PC-9 (cell line): ENCODE measurements at regions of chr3 and their contacts with region 1.

Region 1: GRCh38 chr3:132343018-132343612 is 25.9 kb downstream of the ACP3 start:
- DNase-seq: peak; percentile 25 to 51
- H3K4me3 ChIP-seq: no peak overlapping the region
- H3K27ac ChIP-seq: no peak overlapping the region
- H3K4me1 ChIP-seq: peaks cover 44% of the 10 kb centered on the region
- H3K27me3 ChIP-seq: no peaks in the 10 kb centered on the region
- CTCF ChIP-seq: peak; percentile 86

Region 2: DNA sequence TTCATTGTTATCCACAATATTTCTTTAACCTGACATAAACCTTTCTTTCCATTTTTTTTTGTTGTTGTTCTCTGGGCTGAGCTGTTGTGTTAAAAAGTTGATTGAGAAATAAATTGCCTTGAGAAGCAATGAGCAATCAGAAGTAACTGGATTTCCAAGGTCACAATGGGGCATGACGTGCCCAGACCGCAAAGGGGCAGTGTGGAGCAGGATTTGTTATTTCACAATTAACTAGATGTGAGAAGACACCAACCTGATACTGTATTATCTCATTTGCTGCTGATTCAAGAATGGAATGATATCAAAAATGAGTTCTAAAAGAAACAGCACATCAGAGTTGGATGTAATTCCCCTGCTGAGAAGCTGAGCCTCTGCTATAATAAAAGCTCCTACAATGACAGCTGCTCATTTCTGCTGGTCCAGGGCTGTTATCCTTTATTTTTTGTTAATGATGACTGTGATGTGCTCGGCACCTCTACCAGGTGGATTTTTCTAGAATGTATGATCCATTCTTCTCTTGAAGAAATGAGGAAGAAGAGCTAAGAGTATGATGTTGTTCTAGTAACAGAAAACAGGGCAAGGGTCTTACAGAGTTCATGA is 336.4 kb before region 1 on chr3:
- CTCF ChIA-PET with region 1: no interaction called
- POLR2A ChIA-PET with region 1: no interaction called
- intact Hi-C with region 1: loop called (anchors 10 kb)
- DNase-seq: peak in 1 of 2 experiments; percentile 33
- H3K4me3 ChIP-seq: no peak overlapping the region
- H3K27ac ChIP-seq: no peak overlapping the region
- H3K4me1 ChIP-seq: peaks cover 40% of the 10 kb centered on the region
- H3K27me3 ChIP-seq: no peaks in the 10 kb centered on the region
- CTCF ChIP-seq: peak; percentile 70

Region 3: DNA sequence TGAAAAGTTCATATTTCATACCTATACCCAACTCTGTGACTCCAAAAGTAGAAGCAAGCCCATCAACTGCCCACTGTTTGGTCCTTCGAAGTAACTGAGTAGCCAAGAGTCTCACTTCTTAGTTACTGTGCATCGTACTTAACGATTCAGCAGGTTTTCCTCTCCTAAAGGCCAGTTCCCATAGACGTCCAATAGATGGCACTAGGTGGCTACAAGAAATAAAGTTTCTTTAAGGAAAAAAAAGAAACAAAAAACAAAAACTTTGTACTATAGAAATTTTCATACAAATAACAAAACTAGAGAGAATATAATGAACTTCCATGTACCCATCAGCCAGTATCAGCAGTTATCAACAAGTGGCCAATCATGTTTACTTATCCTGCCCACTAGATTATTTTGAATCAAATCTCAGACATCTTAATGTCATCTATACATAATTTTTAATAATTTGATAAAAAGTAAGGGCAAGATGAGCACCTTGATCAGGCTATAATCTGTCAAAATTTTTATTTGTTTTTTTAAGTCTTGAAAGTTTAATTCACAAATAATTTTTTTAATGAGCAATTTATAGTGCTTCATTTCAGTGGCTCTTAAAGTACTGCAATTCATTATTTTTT is 89.7 kb before region 1 on chr3:
- CTCF ChIA-PET with region 1: interaction called, 36 read pairs
- POLR2A ChIA-PET with region 1: interaction called, 4 read pairs
- intact Hi-C with region 1: loop called (anchors 1 kb)
- DNase-seq: peak; percentile 16 to 56
- H3K4me3 ChIP-seq: no peak overlapping the region
- H3K27ac ChIP-seq: no peak overlapping the region
- H3K4me1 ChIP-seq: peaks cover 34% of the 10 kb centered on the region
- H3K27me3 ChIP-seq: no peaks in the 10 kb centered on the region
- CTCF ChIP-seq: peak; percentile 83

Region 4: DNA sequence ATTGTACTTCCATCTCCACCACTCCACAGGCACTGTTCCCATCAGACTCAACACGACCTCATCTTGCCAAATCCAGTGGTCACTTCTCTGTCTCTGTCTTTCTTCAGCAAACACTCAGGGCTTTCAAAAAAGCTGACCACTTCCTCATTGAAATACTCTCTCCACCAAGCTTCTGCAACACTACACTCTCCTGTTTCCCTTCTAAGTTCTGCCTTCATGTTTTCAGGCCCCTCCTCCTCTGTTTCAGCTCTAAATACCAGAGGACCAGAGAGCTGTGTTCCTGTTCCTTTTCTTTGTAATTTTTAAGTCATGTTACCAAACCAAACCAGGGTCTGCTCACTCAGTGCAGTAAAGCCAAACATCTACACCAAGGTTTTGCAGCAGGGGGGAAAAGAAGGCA is 59.7 kb before region 1 on chr3:
- CTCF ChIA-PET with region 1: interaction called, 5 read pairs
- POLR2A ChIA-PET with region 1: interaction called, 4 read pairs
- intact Hi-C with region 1: loop called (anchors 1 kb)
- DNase-seq: peak; percentile 14 to 59
- H3K4me3 ChIP-seq: no peak overlapping the region
- H3K27ac ChIP-seq: no peak overlapping the region
- H3K4me1 ChIP-seq: peaks cover 12% of the 10 kb centered on the region; the same call in 1 of the 2 replicates
- H3K27me3 ChIP-seq: no peaks in the 10 kb centered on the region
- CTCF ChIP-seq: no peak

Region 5: DNA sequence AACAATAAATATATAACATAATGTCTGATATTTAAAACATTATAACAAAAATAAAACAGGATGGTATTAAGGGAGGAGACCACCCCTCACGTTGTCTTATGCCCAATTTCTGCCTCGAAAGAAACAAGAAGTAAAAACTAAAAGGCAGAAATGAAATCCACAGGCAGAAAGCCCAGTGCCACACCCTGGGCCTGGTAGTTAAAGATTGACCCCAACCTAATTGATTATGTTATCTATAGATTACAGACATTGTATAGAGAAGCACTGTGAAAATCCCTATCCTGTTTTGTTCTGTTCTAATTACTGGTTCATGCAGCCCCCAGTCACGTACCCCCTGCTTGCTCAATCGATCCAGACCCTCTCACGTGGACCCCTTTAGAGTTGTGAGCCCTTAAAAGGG is 48.2 kb before region 1 on chr3:
- CTCF ChIA-PET with region 1: no interaction called
- POLR2A ChIA-PET with region 1: no interaction called
- intact Hi-C with region 1: no loop called
- DNase-seq: no peak
- H3K4me3 ChIP-seq: no peak overlapping the region
- H3K27ac ChIP-seq: no peak overlapping the region
- H3K4me1 ChIP-seq: no peaks in the 10 kb centered on the region
- H3K27me3 ChIP-seq: no peaks in the 10 kb centered on the region
- CTCF ChIP-seq: no peak

Region 6: DNA sequence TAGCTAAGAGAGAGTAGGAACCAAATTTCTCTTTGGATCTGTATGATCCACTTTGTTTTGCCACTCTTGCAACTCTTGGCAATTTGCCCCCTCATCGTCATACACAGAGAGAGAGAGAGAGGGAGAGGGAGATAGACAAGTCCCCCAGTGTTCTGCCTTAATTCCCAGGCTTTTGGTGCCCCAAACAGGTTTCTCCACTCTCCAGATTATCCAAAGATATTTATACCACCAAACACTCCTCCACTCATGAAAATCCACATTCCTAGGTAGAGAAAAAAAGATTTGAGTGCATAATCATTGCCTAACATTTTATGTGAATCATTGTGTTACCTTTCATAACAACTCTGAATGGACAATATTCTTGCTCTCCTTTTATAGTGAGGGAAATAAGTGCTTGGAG is 10.6 kb before region 1 on chr3:
- CTCF ChIA-PET with region 1: no interaction called
- POLR2A ChIA-PET with region 1: no interaction called
- intact Hi-C with region 1: no loop called
- DNase-seq: peak in 1 of 2 experiments; percentile 69
- H3K4me3 ChIP-seq: no peak overlapping the region
- H3K27ac ChIP-seq: no peak overlapping the region
- H3K4me1 ChIP-seq: peaks cover 15% of the 10 kb centered on the region; the same call in 1 of the 2 replicates
- H3K27me3 ChIP-seq: no peaks in the 10 kb centered on the region
- CTCF ChIP-seq: no peak

Region 7: GRCh38 chr3:132399054-132399929 is 56.2 kb after region 1 on chr3:
- CTCF ChIA-PET with region 1: interaction called, 3 read pairs
- POLR2A ChIA-PET with region 1: no interaction called
- intact Hi-C with region 1: loop called (anchors 2 kb)
- DNase-seq: peak; percentile 42 to 43
- H3K4me3 ChIP-seq: no peak overlapping the region
- H3K27ac ChIP-seq: no peak overlapping the region
- H3K4me1 ChIP-seq: no peaks in the 10 kb centered on the region
- H3K27me3 ChIP-seq: no peaks in the 10 kb centered on the region
- CTCF ChIP-seq: peak; percentile 91

Region 8: GRCh38 chr3:132669256-132669777 is 326.2 kb after region 1 on chr3:
- CTCF ChIA-PET with region 1: no interaction called
- POLR2A ChIA-PET with region 1: no interaction called
- intact Hi-C with region 1: no loop called
- DNase-seq: no peak
- H3K4me3 ChIP-seq: no peak overlapping the region
- H3K27ac ChIP-seq: no peak overlapping the region
- H3K4me1 ChIP-seq: peaks cover 14% of the 10 kb centered on the region
- H3K27me3 ChIP-seq: no peaks in the 10 kb centered on the region
- CTCF ChIP-seq: no peak